Activated T-helper 1 cell treated with anti-CD3 and anti-CD28 coated beads, Interleukin-12 subunit alpha, Interleukin-12 subunit beta, Interleukin-2, Interleukin-4 antibody, amounts not matched to agents 30 ng/mL and 10 ng/mL and 1 ng/mL, durations not matched to agents 14 hours and 24 hours and 36 hours (primary cell): ENCODE measurements at regions of chr21 and their contacts with region 1.

Region 1: GRCh38 chr21:46228345-46229051 is at the start of gene LSS:
- DNase-seq: peak; percentile 97
- H3K4me3 Mint-ChIP-seq: peak within 1 kb of the TSS; percentile 92
- H3K27ac Mint-ChIP-seq: peak within 1 kb of the TSS; percentile 99
- H3K4me1 Mint-ChIP-seq: peaks cover 60% of the 10 kb centered on the region
- H3K27me3 Mint-ChIP-seq: no peaks in the 10 kb centered on the region
- total RNA-seq, gene LSS: 15.8 and 17.0 TPM in 2 replicates

Region 2: DNA sequence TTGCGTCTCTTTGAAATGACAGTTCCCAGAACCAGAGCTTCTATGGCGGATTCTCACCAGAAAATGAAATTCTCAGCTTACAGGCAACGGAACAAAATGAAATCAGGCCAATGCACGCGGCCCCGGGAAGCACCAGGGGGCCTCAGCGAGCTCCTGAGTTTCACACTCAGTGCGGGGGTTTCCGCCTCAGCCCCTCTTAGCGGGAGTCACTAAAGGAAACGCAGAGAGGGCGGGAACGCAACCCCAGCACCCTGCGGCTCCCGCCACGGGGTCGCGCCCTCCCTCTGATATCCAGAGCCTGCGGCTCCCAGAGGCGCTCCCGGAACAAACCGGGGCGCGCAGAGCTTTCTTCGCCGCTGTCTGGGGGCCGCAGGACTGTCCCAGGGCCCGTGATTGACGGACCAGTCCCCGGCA is 254.8 kb before region 1 on chr21:
- intact Hi-C with region 1: loop called (anchors 1 kb)
- DNase-seq: peak; percentile 64
- H3K4me3 Mint-ChIP-seq: peak overlapping the region; percentile 83
- H3K27ac Mint-ChIP-seq: peak overlapping the region; percentile 67
- H3K4me1 Mint-ChIP-seq: peaks cover 7% of the 10 kb centered on the region
- H3K27me3 Mint-ChIP-seq: peaks cover 31% of the 10 kb centered on the region

Region 3: DNA sequence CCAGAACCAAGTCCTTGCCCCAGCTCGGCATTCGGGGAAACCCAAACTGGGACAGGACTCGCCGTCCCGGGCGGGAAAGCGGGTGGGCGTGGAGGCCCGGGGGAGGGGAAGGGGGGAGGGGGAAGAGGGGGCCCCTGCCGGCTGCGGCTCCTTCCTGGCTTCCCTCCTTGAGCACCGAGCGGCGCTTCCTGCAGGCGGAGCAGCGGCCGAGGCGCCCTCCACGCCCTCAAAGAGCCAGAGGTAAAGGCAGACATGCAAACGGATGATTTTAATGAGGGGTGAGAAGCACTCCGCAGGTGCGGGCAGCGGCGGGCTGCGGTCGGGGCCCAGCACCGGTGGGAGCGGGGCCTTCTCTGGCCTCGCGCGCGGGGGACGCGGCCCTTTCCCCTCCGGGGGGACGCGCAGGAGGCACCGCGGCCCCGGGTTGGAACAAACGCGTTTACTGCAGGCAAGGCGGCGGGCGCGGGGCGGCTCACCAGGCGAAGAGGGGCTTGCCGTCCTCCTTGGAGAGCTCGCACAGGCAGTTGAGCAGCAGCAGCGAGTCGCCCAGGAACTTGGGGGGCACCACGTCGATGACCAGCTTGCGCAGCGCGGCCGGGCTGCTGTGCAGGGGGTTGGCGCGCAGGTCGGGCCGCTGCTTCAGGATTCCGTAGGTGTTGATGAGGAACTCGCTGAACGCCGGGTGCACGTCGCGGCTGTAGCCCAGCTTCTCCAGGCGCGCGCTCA is 67.4 kb before region 1 on chr21:
- intact Hi-C with region 1: loop called (anchors 2 kb)
- DNase-seq: no peak
- H3K4me3 Mint-ChIP-seq: no peak overlapping the region
- H3K27ac Mint-ChIP-seq: no peak overlapping the region
- H3K4me1 Mint-ChIP-seq: no peaks in the 10 kb centered on the region
- H3K27me3 Mint-ChIP-seq: peaks cover 3% of the 10 kb centered on the region

Region 4: DNA sequence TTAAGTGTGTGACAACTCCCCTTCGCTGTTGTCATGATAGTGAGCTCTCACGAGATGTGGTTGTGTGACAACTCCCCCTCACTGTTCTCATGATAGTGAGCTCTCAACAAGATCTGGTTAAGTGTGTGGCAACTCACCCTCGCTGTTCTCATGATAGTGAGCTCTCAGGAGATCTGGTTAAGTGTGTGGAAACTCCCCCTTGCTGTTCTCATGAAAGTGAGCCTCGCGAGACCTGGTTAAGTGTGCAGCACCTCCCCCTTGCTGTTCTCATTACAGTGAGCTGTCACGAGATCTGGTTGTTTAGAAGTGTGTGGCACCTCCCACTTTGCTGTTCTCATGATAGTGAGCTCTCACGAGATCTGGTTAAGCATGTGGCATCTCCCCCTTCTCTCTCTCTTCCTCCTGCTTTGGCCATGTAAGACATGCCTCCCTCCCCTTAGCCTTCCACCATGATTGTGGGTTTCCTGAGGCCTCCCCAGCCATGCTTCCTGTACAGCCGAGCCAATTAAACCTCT is 25.2 kb after region 1 on chr21:
- intact Hi-C with region 1: loop called (anchors 1 kb)
- DNase-seq: peak; percentile 62
- H3K4me3 Mint-ChIP-seq: peak overlapping the region; percentile 62
- H3K27ac Mint-ChIP-seq: peak overlapping the region; percentile 95
- H3K4me1 Mint-ChIP-seq: peaks cover 43% of the 10 kb centered on the region
- H3K27me3 Mint-ChIP-seq: no peaks in the 10 kb centered on the region

Region 5: DNA sequence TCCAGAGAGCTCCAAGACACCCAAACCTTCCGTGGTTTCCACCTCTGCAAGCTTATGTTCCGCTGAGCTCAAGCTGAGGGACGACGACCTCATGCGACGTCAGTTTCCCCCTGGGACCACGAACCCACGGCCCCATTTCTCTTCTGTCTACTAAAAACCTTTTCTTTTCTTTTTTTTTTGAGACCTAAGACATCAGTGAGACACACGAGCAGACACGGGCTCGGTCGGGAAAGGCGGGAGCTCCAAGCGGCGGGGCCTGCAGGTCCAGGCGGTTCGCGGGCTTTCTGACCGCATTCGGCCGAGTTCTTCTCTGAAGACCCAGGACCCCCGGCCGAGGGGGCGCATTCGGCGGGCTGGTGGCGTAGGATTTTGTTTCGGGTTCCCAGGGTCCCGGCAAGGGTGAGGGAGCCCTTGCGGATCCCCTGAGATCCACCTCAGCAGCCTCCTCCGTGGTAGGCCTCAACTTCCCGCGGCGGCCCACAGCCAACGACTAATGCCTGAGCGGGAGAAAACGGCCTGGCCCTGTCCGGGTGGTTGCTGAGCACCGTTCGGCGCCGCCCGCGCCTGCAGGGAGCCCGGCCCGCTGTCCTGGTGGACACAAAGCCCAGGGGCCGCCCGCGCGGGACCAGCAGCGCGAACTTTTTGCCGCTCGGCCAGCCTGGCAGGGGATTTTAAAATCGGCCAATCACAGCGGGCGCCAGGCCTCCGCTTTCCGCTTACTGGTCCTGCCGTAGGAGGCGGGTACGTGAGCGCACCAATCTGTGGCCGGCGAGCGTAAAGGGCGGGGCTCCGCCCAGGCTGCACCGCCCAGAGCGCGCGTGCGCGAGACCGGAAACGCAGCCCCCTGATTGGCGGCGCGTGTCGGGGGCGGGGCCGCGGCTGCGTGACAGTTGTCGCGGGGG is 95.0 kb after region 1 on chr21 and contains the start of gene C21orf58:
- intact Hi-C with region 1: loop called (anchors 1 kb)
- DNase-seq: peak; percentile 99
- H3K4me3 Mint-ChIP-seq: peak within 1 kb of the TSS; percentile 93
- H3K27ac Mint-ChIP-seq: peak within 1 kb of the TSS; percentile 98
- H3K4me1 Mint-ChIP-seq: peaks cover 43% of the 10 kb centered on the region
- H3K27me3 Mint-ChIP-seq: no peaks in the 10 kb centered on the region
- total RNA-seq, gene C21orf58: 26.7 and 26.9 TPM in 2 replicates